ENCODE measurements at regions of chr2 and their contacts with region 1.

Region 1: DNA sequence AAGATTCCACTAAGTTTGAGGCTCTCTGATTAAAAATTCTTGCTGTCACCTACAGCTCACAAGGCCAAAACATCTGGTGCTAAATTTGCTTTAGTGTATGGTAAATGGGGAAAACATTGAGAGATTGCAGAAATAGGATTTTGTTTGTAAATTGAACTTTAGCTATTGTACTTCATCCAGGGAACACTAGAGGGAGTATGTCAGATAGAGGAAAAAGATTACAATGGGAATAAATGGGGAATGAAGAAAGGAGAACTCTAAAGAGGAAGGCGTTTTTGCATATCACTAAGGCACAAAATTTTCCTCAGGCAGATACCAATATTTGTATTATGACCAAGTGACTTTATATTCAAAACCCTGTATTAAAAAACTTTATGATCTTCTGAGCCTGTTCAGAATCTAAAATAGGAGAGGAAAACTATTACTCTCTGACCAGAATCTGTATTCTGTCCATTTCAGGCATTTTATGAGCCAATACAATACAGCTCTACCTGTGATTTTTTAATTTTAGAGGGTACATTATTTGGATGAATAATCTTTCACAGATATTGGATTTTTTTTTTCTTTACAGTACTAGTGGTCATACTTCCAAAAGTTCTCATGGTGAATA is 52.3 kb upstream of the ITGB6 start:
- DNase-seq: no peak
- ATAC-seq: no peak
- H3K4me3 Mint-ChIP-seq: no peak overlapping the region
- H3K27ac Mint-ChIP-seq: no peak overlapping the region
- H3K4me1 Mint-ChIP-seq: no peaks in the 10 kb centered on the region
- H3K27me3 Mint-ChIP-seq: peaks cover 18% of the 10 kb centered on the region

Region 2: GRCh38 chr2:159895258-159896065 is 356.9 kb before region 1 on chr2:
- CTCF ChIA-PET with region 1: no interaction called
- POLR2A ChIA-PET with region 1: no interaction called
- DNase-seq: no peak
- ATAC-seq: no peak
- H3K4me3 Mint-ChIP-seq: no peak overlapping the region
- H3K27ac Mint-ChIP-seq: no peak overlapping the region
- H3K4me1 Mint-ChIP-seq: peaks cover 16% of the 10 kb centered on the region
- H3K27me3 Mint-ChIP-seq: no peaks in the 10 kb centered on the region

Region 3: DNA sequence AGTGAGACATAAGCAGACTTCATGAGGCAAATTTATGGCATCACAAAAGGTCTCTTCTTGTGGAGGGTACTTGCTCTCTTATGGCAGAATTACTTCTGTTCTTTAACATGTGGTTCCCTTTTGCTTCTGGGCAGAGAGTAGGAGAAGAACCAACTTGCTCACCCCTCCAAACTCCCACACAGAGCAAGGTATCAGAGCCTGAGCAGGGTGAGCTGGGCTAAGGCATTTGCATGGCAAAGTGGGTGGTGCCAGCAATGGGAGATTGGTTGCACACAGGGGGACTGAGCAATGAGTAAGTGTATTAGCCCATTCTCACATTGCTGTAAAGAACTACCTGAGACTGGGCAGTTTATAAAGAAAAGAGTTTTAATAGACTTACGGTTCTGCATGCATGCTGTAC is 11.9 kb after region 1 on chr2:
- CTCF ChIA-PET with region 1: interaction called, 11 read pairs
- POLR2A ChIA-PET with region 1: no interaction called
- DNase-seq: no peak
- ATAC-seq: no peak
- H3K4me3 Mint-ChIP-seq: no peak overlapping the region
- H3K27ac Mint-ChIP-seq: no peak overlapping the region
- H3K4me1 Mint-ChIP-seq: peaks cover 19% of the 10 kb centered on the region
- H3K27me3 Mint-ChIP-seq: peaks cover 8% of the 10 kb centered on the region

Region 4: DNA sequence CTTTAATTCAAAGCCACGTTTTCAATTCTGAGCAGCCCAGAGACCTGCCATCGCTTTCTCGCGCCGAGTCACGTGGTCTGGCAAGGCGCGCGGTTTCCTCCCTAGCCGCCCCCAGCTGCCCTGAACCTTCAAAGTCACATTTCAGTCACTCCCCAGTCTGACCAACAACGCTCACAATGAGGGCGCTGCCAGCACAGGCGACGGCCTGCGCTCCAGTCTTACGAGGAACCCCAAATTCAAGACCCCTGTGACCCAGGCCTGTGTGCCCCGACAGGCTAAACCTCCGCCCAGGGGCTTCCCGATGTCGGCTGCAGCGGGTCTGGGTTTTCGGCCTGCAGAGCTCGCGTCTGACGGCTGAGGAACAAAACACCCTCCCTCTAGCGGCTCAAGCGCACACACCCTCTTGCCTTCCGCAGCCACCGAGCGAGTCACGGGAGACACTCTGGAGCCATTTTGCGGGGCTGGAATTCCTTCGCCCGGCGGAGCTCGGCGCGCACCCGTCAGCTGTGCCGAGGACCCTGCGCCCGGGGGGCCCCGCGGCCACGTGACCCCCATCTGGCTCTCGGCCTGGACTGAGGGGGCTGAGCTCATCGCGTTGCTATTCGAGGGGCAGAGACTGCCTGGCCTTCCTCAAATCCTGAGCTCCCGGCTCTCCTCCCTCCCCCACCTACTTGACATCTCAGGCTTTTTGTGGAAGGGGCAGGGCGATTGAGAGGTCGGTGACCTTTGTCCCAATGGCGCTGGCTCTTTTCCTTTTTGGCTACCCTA is 17.6 kb after region 1 on chr2:
- CTCF ChIA-PET with region 1: interaction called, 14 read pairs
- POLR2A ChIA-PET with region 1: no interaction called
- DNase-seq: peak; percentile 74
- ATAC-seq: peak; percentile 90
- H3K4me3 Mint-ChIP-seq: peak overlapping the region; percentile 71
- H3K27ac Mint-ChIP-seq: peak overlapping the region; percentile 73
- H3K4me1 Mint-ChIP-seq: peaks cover 34% of the 10 kb centered on the region
- H3K27me3 Mint-ChIP-seq: peaks cover 2% of the 10 kb centered on the region